Transverse colon (tissue), 4 donors: ENCODE measurements at regions of chr7 and their contacts with region 1.

Region 1: GRCh38 chr7:93890464-93891068 is at the start of gene TFPI2:
- DNase-seq: peak; percentile 14
- H3K4me3 ChIP-seq: peak within 1 kb of the TSS; percentile 14 to 53 (median 34)
- H3K27ac ChIP-seq: peak within 1 kb of the TSS in 3 of 4 donors; percentile 10 to 44 (median 40)
- H3K4me1 ChIP-seq: peaks cover 0 to 5% (median 0%) of the 10 kb centered on the region in 4 donors
- H3K27me3 ChIP-seq: peaks cover 27% of the 10 kb centered on the region
- CTCF ChIP-seq: no peak
- EP300 ChIP-seq: no peak
- POLR2A ChIP-seq: no peak
- total RNA-seq, gene TFPI2: 0.40 to 0.79 (median 0.68) TPM in 3 of 4 donors, not detected in the other

Region 2: GRCh38 chr7:93574646-93575554 is 315.7 kb before region 1 on chr7 and contains the start of gene CALCR:
- in situ Hi-C with region 1: no loop called
- intact Hi-C with region 1: no loop called
- DNase-seq: no peak
- H3K4me3 ChIP-seq: peak within 1 kb of the TSS in 1 of 4 donors; percentile 34
- H3K27ac ChIP-seq: no peak within 1 kb of the TSS
- H3K4me1 ChIP-seq: peaks cover 0 to 14% (median 6%) of the 10 kb centered on the region in 4 donors
- H3K27me3 ChIP-seq: peaks cover 31% of the 10 kb centered on the region
- CTCF ChIP-seq: no peak
- EP300 ChIP-seq: no peak
- POLR2A ChIP-seq: no peak
- total RNA-seq, gene CALCR: not detected

Region 3: GRCh38 chr7:94087664-94088352 is 197.2 kb after region 1 on chr7:
- in situ Hi-C with region 1: loop called in 1 of 4 experiments (anchors 25 kb)
- intact Hi-C with region 1: no loop called
- DNase-seq: peak; percentile 33
- H3K4me3 ChIP-seq: peak overlapping the region in 1 of 4 donors; percentile 36
- H3K27ac ChIP-seq: no peak overlapping the region
- H3K4me1 ChIP-seq: peaks cover 0 to 9% (median 5%) of the 10 kb centered on the region in 4 donors
- H3K27me3 ChIP-seq: no peaks in the 10 kb centered on the region
- CTCF ChIP-seq: peak; percentile 63 to 71 (median 68)
- EP300 ChIP-seq: no peak
- POLR2A ChIP-seq: no peak